ENCODE measurements at regions of chr2 and their contacts with region 1.

Region 1: DNA sequence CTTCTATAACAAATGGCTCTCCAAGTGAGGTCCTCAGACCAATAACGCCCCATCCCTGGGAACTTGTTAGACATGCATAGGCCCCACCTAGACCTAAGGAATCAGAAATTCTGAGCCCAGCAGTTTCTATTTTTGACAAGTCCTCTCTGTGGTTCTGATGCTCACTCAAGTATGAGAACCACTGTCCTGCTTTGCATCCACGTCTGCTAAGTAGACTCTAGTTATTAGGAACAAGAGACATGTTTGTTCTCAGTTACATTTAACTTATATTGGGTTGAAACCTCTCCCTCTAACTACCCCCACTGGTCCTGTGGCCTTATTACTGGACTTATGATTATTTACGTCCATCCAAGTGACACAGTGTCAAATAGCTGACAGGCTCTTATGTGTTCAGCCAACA is 70.3 kb downstream of the TMEM17 start:
- DNase-seq: no peak
- H3K4me3 ChIP-seq: no peak overlapping the region
- H3K27ac ChIP-seq: no peak overlapping the region
- H3K4me1 ChIP-seq: no peaks in the 10 kb centered on the region
- H3K27me3 ChIP-seq: no peaks in the 10 kb centered on the region
- CTCF ChIP-seq: no peak
- EP300 ChIP-seq: no peak
- POLR2A ChIP-seq: no peak
- RAD21 ChIP-seq: no peak

Region 2: DNA sequence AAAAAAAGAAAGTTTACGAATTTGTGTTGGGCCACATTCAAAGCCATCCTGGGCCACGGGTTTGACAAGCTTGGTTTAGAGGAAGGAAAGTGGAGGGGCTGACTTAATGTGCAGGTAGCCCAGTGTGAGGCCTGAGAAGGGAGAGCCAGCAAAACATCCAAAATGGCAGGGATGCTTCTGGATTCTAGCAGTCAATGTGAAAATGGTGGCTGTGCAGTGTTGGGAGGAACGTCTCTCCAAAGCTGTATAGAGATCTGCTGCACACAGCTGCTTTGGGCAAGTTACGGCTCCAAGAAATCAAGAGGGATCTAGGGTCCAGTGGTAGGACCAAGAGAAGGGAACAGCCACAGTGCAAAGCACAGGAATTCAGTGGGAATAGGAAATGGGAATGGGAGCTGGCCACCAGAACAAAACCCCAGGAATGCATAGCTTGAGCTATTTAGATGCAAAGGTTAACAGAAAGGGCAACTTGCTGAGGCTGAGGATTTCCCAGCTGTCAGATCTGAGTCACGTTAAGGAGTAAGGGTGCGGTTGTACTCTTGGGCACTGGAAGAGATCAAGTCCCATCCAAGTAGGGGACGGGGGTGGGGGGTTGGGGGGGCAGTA is 169.2 kb before region 1 on chr2:
- CTCF ChIA-PET with region 1: no interaction called
- POLR2A ChIA-PET with region 1: no interaction called
- DNase-seq: peak; percentile 19 to 51
- H3K4me3 ChIP-seq: 0 out of 8 replicates have a peak overlapping the region, but pooled peaks of 1 of the 4 experiments have one; percentile 5
- H3K27ac ChIP-seq: peak overlapping the region; percentile 8; the same call in 1 of the 2 replicates
- H3K4me1 ChIP-seq: peaks cover 2 to 8% (median 4%) of the 10 kb centered on the region in 4 experiments; a peak in 4 of 7 replicates
- H3K27me3 ChIP-seq: no peaks in the 10 kb centered on the region
- CTCF ChIP-seq: no peak
- EP300 ChIP-seq: peak in 1 of 2 experiments; percentile 30; a peak in 1 of 3 replicates
- POLR2A ChIP-seq: no peak
- RAD21 ChIP-seq: no peak

Region 3: GRCh38 chr2:62398356-62398755 is 37.4 kb before region 1 on chr2:
- CTCF ChIA-PET with region 1: no interaction called
- POLR2A ChIA-PET with region 1: no interaction called
- DNase-seq: no peak
- H3K4me3 ChIP-seq: no peak overlapping the region
- H3K27ac ChIP-seq: no peak overlapping the region
- H3K4me1 ChIP-seq: no peaks in the 10 kb centered on the region
- H3K27me3 ChIP-seq: no peaks in the 10 kb centered on the region
- CTCF ChIP-seq: no peak
- EP300 ChIP-seq: no peak
- POLR2A ChIP-seq: no peak
- RAD21 ChIP-seq: no peak

Region 4: GRCh38 chr2:62423232-62423631 is 12.5 kb before region 1 on chr2:
- CTCF ChIA-PET with region 1: interaction called, 13 read pairs
- POLR2A ChIA-PET with region 1: no interaction called
- DNase-seq: no peak
- H3K4me3 ChIP-seq: no peak overlapping the region
- H3K27ac ChIP-seq: no peak overlapping the region
- H3K4me1 ChIP-seq: no peaks in the 10 kb centered on the region
- H3K27me3 ChIP-seq: no peaks in the 10 kb centered on the region
- CTCF ChIP-seq: peak; percentile 19 to 71 (median 54)
- EP300 ChIP-seq: no peak
- POLR2A ChIP-seq: no peak
- RAD21 ChIP-seq: peak; percentile 51 to 70

Region 5: DNA sequence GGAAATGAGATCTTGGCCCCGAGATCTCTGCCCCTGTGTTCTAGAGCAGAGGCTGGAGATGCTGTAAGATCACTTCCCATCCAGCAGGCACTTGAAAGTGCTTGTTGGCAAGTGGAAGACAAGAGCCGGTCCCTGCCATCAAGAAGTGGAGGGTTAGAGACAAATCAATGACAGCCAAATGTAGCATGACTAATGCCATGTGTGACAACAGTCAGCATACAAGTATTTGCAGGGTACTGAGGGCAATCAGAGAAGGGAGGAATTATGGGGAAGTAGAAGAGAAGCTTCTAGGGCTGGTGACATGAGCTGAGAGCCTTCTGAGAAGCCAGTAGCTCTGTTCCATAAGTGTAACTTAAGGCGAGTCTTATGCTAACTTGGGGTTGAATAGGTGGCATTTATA is 11.7 kb after region 1 on chr2:
- CTCF ChIA-PET with region 1: interaction called, 10 read pairs
- POLR2A ChIA-PET with region 1: interaction called, 5 read pairs
- DNase-seq: no peak
- H3K4me3 ChIP-seq: no peak overlapping the region
- H3K27ac ChIP-seq: no peak overlapping the region
- H3K4me1 ChIP-seq: no peaks in the 10 kb centered on the region
- H3K27me3 ChIP-seq: no peaks in the 10 kb centered on the region
- CTCF ChIP-seq: no peak
- EP300 ChIP-seq: no peak
- POLR2A ChIP-seq: no peak
- RAD21 ChIP-seq: no peak

Measured in H1 (cell line).